Breast epithelium (tissue), 4 donors: ENCODE measurements at regions of chr2 and their contacts with region 1.

Region 1: DNA sequence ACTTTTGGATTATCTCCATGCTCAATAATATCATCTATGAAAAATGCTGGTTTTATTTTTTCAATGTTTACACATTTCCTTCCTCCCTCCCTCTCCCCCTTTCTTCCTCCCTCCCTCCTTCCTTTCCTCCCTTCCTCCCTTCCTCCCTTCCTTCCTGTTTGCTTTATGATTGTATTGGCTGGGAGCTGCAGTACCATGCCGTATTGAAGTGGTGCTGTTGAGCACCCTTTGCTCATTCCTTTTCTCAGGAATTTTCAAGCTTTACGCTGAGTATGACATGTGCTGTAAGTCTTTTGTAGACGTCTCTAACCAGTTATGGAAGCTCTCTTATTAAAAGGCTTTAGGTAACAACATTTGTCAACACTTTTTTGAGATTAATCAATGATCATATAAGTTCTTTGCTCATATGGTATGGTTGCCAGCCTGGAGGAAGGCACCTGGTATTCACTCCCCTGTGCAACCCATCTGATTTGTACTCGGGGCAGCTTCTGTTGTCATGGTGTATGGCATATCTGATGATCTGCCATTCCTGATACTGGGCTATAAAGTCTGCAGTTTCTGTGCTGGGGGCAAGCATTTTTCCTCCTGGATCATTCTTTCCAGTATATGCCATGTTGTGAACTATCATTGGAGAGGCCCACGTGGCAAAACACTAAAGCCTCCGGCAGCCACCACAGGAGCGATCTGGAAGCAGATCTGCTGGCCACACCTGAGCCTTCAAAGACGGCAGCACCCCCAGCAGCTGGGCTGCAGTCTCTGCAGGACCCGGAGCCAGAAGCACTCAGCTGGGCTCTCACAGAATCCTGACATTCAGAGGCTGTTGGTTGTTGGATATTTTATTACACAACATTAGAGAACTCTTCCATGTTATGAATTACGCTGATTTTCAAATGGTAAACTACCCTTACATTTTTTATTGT is 100.7 kb downstream of the SNTG2 start:
- DNase-seq: no peak
- H3K4me3 ChIP-seq: no peak overlapping the region
- H3K27ac ChIP-seq: no peak overlapping the region
- H3K4me1 ChIP-seq: no peaks in the 10 kb centered on the region
- H3K27me3 ChIP-seq: no peaks in the 10 kb centered on the region
- CTCF ChIP-seq: no peak
- POLR2A ChIP-seq: no peak

Region 2: DNA sequence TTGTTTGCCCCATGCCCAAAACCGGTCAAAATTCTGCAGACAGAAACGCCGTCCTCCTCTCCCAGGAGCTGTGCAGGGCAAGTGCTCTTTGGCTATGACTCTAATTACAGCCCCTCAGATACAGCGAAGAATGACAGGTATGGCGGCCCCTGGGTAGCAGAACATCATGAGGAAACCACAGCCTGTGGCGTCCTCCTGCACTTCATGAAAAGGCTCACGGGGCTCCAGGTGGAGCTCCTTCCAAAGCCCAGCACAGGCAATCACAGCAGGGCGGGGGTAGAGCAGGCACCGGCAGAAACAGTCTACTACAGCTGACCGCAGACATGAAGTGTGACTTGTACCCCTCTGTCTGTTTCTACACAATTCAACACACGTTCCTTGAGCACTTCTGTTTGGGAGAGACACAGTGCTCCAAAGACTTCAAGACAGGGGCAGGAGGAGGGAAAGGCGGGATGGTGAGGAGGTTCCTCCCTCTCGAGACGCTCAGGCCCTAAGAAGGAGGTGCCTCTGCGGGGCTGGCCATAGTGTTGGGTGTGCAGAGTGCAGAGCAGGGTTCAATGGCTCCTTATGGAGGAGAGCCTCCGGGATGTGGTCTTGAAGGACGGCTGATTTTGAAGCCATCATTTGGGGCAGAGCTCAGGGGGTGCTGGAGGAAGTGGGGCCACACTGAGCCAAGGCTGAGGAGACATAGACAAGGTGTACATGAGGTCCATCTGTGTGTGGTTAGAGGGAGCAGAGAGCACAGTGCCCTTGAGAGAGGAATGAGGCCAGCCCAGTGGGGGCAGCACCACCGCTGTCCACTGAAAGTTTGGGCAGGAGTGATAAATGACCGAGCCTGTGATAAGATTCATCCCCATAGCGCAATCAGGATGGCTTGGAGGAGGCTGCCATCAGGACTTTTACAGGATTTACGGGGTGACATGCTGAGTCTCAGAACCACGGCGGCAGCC is 1858.0 kb after region 1 on chr2:
- intact Hi-C with region 1: loop called (anchors 5 kb)
- DNase-seq: no peak
- H3K4me3 ChIP-seq: no peak overlapping the region
- H3K27ac ChIP-seq: no peak overlapping the region
- H3K4me1 ChIP-seq: no peaks in the 10 kb centered on the region
- H3K27me3 ChIP-seq: peaks cover 0 to 6% of the 10 kb centered on the region in 2 donors
- CTCF ChIP-seq: no peak
- POLR2A ChIP-seq: no peak